GM13976 (cell line): ENCODE measurements at regions of chr21 and their contacts with region 1.

Region 1: DNA sequence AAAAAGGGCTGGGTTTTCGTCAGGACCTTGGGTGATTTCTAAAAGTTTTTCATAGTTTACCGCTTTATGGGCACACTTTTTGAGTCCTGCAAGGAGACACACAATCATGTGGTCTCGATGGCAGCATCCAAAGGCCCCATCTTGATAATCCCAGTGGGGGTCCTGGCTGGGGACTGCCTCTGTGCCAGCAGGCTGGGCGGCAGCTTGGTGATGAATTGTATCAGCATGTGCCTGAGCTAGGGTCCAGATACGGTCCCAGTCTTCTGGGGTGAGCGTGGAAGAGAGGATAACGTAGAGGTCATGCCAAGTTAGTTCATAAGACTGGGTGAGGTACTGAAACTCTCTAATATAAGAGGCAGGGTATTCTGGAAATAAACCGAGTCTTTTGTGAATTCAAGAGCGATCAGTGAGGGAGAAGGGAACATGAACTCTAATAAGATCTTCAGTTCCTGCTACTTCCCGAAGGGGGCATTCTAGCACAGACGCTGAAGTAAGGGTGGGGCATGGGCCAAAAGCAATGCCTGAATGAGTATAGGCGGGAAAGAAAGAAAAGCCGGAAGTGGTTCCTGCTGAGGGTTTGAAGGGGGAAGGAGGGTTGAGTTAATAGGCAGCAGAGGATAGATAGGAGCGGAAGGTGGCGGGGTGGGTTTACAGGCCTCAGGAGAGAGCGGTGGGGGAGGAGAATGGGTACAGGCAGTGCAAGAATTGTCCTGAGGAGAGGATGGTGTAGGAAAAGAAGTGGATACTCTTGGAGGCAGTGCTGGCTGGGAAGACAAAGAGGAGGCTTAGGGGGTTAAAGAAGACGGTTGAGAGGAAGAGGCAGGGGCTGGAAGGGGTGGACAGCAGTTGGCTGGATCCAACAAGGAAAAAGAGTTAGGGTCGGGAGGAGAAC is 1.6 kb downstream of the ERVH48-1 start:
- DNase-seq: peak; percentile 89
- CTCF ChIP-seq: peak; percentile 54

Region 2: DNA sequence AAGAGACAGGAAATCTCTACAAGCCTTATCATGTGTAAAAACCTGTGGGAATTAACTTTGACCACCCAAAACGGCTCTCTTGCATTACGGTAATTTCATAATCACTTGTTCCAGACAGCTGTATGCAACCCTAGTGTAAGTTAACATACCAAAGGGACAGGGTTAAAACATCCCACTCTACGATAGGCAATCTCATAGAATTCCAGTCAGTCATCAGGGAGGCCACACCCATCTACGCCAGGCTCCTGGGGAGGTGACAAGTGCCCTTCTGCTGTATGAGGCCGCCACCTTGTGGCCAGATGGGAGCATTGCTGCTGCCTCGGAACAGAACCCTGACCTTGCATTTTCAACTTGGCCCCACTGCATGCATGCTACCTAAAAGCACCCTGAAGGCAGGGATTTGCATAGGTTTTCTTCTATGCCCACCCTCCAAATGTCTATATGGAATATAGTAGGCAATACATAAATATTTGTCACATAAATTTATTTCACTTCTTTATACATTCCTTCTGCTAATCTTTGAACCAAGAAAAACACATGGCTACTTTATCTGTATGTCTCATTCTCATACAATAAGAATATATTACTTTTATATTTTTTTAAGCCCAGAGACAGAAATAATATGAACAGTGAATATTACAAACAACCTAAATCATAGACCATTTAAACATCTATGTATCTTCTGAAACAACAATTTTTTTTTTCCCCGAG is 722.9 kb after region 1 on chr21:
- in situ Hi-C with region 1: loop called (anchors 10 kb)
- DNase-seq: peak; percentile 86
- CTCF ChIP-seq: peak; percentile 99